GM12878 (cell line): ENCODE measurements at regions of chr3 and their contacts with region 1.

Region 1: DNA sequence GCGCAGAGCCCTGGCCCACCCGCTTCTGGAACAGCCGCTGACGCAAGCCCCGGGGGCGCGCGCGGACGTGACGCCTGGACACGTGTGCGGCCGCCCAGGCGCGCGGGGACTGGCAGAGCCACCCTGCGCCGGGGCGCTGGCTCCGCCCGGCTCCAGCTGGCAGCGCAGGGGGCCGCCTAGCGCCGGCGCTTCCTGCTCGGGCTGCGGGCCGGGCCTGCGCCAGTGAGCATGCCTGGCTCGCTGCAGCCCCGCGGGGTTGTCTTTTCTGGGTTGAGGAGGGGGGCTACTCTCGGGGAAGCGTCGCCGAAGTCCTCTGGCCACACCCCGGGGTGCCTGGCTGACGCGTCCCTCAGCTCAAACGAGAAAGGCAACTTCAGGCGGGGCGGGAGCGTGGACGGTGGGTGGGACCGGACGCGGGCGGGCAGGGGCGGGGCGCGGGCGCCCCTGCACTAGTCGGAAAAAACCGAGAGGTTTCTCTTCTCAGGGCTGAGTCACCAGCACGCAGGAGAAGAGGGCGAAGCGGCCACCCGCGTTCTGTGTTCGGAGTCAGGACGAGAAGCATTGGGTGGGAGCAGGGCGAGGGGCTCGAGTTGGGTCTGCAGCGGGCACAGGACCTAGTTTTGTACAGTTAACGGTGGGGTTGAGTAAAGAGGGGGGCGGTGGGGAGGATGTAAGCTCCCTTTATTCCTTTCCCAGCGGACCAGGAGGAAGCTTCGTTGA is at the start of gene SIAH2:
- DNase-seq: peak; percentile 71
- ATAC-seq: peak; percentile 78
- H3K4me3 ChIP-seq: peak within 1 kb of the TSS; percentile 94
- H3K27ac ChIP-seq: peak within 1 kb of the TSS; percentile 77
- H3K4me1 ChIP-seq: peaks cover 29% of the 10 kb centered on the region
- H3K27me3 ChIP-seq: no peaks in the 10 kb centered on the region
- CTCF ChIP-seq: no peak
- EP300 ChIP-seq: no peak; a peak in 1 of 4 replicates
- POLR2A ChIP-seq: peak; percentile 86
- RAD21 ChIP-seq: no peak
- polyA plus RNA-seq, gene SIAH2: 6.1 to 14.2 TPM

Region 2: DNA sequence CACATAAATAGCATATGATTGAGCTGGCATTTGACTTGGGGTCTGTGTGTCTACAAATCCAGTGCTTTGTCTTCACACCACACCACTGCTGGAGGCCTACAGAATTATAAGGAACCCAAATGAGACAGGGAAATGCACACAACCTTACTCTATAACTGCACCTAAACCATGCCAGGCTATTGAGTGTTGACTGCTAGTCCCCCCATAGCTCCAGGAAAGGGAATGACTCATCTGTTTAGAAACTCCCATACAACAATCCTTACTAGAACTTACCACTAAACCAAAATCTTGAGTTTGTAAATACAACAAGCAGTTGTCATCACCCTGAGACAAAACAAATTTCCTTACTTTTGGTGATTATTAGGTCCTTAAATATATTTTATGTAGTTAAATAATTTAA is 372.1 kb before region 1 on chr3:
- CTCF ChIA-PET with region 1: no interaction called
- POLR2A ChIA-PET with region 1: interaction called, 3 read pairs
- RAD21 ChIA-PET with region 1: interaction called, 5 read pairs
- SMC1A ChIA-PET with region 1: no interaction called
- in situ Hi-C with region 1: no loop called
- intact Hi-C with region 1: loop called (anchors 5 kb)
- DNase-seq: no peak
- ATAC-seq: no peak
- H3K4me3 ChIP-seq: no peak overlapping the region
- H3K27ac ChIP-seq: no peak overlapping the region
- H3K4me1 ChIP-seq: peaks cover 8% of the 10 kb centered on the region
- H3K27me3 ChIP-seq: no peaks in the 10 kb centered on the region
- CTCF ChIP-seq: no peak
- EP300 ChIP-seq: no peak
- POLR2A ChIP-seq: no peak
- RAD21 ChIP-seq: no peak

Region 3: GRCh38 chr3:150603153-150603979 is 159.9 kb before region 1 on chr3 and contains the start of gene SELENOT:
- CTCF ChIA-PET with region 1: interaction called, 7 read pairs
- POLR2A ChIA-PET with region 1: interaction called, 40 read pairs
- RAD21 ChIA-PET with region 1: interaction called, 22 read pairs
- SMC1A ChIA-PET with region 1: interaction called, 11 read pairs
- in situ Hi-C with region 1: no loop called
- intact Hi-C with region 1: loop called (anchors 2 kb)
- DNase-seq: peak; percentile 94
- ATAC-seq: peak; percentile 70
- H3K4me3 ChIP-seq: peak within 1 kb of the TSS; percentile 92
- H3K27ac ChIP-seq: peak within 1 kb of the TSS; percentile 92
- H3K4me1 ChIP-seq: peaks cover 16% of the 10 kb centered on the region
- H3K27me3 ChIP-seq: no peaks in the 10 kb centered on the region
- CTCF ChIP-seq: peak; percentile 2 to 22 (median 10); a peak in 1 of 6 replicates
- EP300 ChIP-seq: peak in 1 of 2 experiments; percentile 32; a peak in 1 of 4 replicates
- POLR2A ChIP-seq: peak; percentile 100
- RAD21 ChIP-seq: 0 out of 2 replicates have a peak, but pooled peaks have one; percentile 1
- polyA plus RNA-seq, gene SELENOT: 323 to 593 TPM

Region 4: DNA sequence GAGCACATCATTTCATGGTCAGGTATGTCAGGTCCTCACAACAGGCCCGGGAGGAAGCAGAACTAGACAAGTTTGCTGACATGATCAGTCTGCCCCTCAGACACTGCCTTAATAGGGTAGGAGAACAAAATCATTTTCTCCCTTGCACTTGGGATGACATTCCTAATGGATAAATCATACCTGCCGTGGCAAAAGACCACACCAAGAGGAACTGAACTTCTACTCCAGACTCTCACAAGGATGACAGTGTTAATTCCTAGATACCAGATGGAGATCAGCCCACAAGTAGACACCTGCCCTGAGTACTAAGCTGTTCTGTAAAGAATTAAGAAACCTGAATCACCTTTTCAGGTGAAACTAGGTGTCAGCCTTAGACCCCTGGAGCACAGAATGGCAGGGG is 19.8 kb before region 1 on chr3:
- CTCF ChIA-PET with region 1: interaction called, 14 read pairs
- POLR2A ChIA-PET with region 1: interaction called, 28 read pairs
- RAD21 ChIA-PET with region 1: interaction called, 30 read pairs
- SMC1A ChIA-PET with region 1: interaction called, 27 read pairs
- in situ Hi-C with region 1: no loop called
- intact Hi-C with region 1: loop called (anchors 2 kb)
- DNase-seq: no peak
- ATAC-seq: no peak
- H3K4me3 ChIP-seq: no peak overlapping the region
- H3K27ac ChIP-seq: no peak overlapping the region
- H3K4me1 ChIP-seq: peaks cover 39% of the 10 kb centered on the region
- H3K27me3 ChIP-seq: no peaks in the 10 kb centered on the region
- CTCF ChIP-seq: no peak
- EP300 ChIP-seq: no peak
- POLR2A ChIP-seq: no peak
- RAD21 ChIP-seq: no peak

Region 5: DNA sequence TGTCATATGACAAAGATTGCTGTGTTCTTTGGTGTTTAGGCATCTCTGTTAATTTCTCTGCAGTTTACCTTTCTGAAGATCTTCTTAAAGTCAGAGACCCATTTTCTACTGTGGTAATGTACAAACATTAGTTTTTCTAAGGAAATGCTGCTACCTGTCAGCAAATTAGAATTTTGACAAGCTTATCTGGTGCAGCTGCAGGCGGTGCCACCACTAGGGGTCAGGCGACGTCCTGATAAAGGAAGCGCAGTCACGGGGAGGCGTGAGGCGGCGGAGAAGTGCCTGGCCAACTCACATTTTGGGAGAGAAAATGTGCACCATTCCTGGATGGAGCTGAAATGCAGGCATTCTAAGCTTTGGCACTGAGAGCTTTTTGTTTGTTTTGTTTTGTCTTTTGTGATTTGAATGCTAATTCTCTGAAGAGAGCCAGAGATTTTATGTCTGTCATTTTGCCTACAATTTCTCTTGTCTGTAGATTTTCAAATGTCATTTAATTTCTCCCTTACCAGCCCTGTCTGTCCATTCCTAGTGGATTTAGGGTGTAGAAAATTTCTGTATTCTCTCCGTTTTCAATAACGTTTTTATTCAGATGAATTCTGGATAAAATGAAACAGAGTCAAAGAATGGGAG is 24.6 kb after region 1 on chr3:
- CTCF ChIA-PET with region 1: interaction called, 42 read pairs
- POLR2A ChIA-PET with region 1: interaction called, 3 read pairs
- RAD21 ChIA-PET with region 1: interaction called, 9 read pairs
- SMC1A ChIA-PET with region 1: interaction called, 14 read pairs
- in situ Hi-C with region 1: no loop called
- intact Hi-C with region 1: loop called (anchors 1 kb)
- DNase-seq: no peak
- ATAC-seq: peak; percentile 94
- H3K4me3 ChIP-seq: no peak overlapping the region
- H3K27ac ChIP-seq: no peak overlapping the region
- H3K4me1 ChIP-seq: peaks cover 2% of the 10 kb centered on the region; the same call in 1 of the 2 replicates
- H3K27me3 ChIP-seq: no peaks in the 10 kb centered on the region; a peak in 1 of 4 replicates
- CTCF ChIP-seq: peak; percentile 94 to 98 (median 97); a peak in 5 of 6 replicates
- EP300 ChIP-seq: no peak
- POLR2A ChIP-seq: no peak
- RAD21 ChIP-seq: peak; percentile 81

Region 6: DNA sequence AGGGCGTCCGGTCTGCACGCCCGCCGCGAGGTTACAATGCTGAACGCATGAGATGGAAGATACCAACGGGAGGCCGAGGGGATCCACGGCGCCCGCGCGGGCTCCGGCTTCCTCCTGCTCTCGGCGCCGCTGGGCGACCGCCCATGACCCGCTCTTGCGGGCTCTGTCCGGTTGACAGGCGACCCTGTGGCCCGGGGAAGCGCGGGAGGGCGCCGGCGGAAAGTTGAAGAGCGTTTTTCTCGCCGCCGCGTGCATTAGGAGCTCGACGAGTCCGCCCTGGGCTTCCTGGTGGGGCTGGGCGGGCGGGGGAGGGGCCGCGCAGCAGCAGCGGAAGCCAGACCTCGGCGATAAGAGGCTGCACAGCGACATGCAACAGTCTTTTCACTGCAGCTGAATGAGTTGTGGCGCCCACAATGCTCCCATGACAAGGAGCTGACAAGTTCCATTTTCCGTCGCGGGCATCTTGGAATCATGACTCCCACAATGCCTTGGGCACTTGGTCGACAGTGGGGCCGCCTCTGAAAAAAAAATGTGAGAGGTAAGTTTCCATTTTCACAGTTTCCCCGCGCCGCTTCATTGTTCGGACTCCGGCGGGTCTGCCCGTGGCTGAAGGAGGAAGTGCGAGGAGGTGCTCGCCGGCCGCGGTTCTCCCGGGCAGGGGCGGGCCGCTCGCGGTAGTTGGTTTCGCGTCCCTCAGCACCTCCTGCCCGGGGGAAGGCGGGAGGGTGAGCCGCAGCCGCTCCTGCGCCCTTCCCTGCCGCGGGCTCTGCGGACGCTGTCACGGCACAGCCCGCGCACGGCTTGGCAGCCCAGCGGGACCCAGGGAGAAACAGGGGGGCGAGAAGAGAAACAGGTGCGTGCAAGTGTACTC is 1505.5 kb after region 1 on chr3 and contains the start of gene MBNL1:
- CTCF ChIA-PET with region 1: no interaction called
- POLR2A ChIA-PET with region 1: no interaction called
- RAD21 ChIA-PET with region 1: no interaction called
- SMC1A ChIA-PET with region 1: no interaction called
- in situ Hi-C with region 1: no loop called
- intact Hi-C with region 1: loop called (anchors 5 kb)
- DNase-seq: no peak
- ATAC-seq: peak; percentile 67
- H3K4me3 ChIP-seq: peak within 1 kb of the TSS; percentile 95
- H3K27ac ChIP-seq: peak within 1 kb of the TSS; percentile 90
- H3K4me1 ChIP-seq: peaks cover 10% of the 10 kb centered on the region
- H3K27me3 ChIP-seq: no peaks in the 10 kb centered on the region
- CTCF ChIP-seq: no peak
- EP300 ChIP-seq: no peak
- POLR2A ChIP-seq: peak; percentile 96
- RAD21 ChIP-seq: no peak
- polyA plus RNA-seq, gene MBNL1: 59.6 to 73.3 TPM